CD14-positive monocyte (primary cell): ENCODE measurements at regions of chr17 and their contacts with region 1.

Region 1: GRCh38 chr17:28763804-28764266 is 20.0 kb downstream of the TRAF4 start:
- DNase-seq: peak; percentile 48 to 72 (median 59)
- H3K4me3 ChIP-seq: no peak overlapping the region
- H3K4me3 Mint-ChIP-seq: no peak overlapping the region
- H3K27ac ChIP-seq: no peak overlapping the region
- H3K27ac Mint-ChIP-seq: no peak overlapping the region
- H3K4me1 ChIP-seq: peaks cover 15 to 16% of the 10 kb centered on the region in 2 donors
- H3K4me1 Mint-ChIP-seq: peaks cover 19% of the 10 kb centered on the region
- H3K27me3 ChIP-seq: no peaks in the 10 kb centered on the region
- H3K27me3 Mint-ChIP-seq: peaks cover 0 to 2% (median 0%) of the 10 kb centered on the region in 3 donors
- CTCF ChIP-seq: peak; percentile 93

Region 2: GRCh38 chr17:28839221-28839620 is 75.4 kb after region 1 on chr17:
- intact Hi-C with region 1: loop called in 1 of 2 experiments (anchors 10 kb)
- DNase-seq: no peak
- H3K4me3 ChIP-seq: no peak overlapping the region
- H3K4me3 Mint-ChIP-seq: no peak overlapping the region
- H3K27ac ChIP-seq: no peak overlapping the region
- H3K27ac Mint-ChIP-seq: no peak overlapping the region
- H3K4me1 ChIP-seq: peaks cover 13 to 15% of the 10 kb centered on the region in 2 donors
- H3K4me1 Mint-ChIP-seq: peaks cover 17% of the 10 kb centered on the region
- H3K27me3 ChIP-seq: no peaks in the 10 kb centered on the region
- H3K27me3 Mint-ChIP-seq: no peaks in the 10 kb centered on the region
- CTCF ChIP-seq: no peak

Region 3: DNA sequence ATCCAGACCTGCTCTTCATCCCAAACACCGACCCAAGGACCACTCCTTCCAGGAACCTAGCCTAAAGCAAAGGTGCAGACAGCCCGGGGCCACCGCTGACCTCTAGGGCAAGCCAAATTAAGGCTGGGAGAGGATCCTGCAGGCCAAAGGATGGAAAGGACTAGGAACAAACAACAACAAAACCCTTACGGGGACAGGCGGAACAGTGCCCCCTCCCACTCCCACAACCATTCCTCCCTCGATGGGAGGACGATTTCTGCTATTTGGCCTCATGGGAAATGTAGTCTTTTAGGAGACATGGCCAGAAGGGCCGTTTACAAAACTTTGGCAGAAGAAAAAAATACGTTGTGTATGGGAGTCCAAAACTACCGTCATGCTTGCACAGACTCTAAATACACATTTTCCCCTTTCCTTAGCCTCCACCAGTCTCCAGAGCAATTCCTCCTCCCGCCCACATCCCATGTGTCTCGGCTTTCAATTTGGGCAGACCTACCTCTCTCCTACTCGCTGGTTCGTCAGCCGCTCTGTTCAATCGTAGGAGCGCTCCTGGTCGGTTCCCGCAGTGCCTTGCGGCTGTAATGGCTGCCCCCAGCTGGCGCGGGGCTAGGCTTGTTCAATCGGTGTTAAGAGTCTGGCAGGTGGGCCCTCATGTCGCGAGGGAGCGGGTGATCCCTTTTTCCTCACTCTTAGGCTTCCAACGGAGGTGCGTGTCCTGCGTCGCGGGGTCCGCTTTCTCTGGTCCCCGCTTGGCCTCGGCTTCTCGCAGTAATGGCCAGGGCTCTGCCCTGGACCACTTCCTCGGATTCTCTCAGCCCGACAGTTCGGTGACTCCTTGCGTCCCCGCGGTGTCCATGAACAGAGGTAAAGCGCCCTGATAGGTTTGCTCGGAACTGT is 90.9 kb after region 1 on chr17 and contains the start of gene ERAL1:
- intact Hi-C with region 1: loop called in 1 of 2 experiments (anchors 10 kb)
- DNase-seq: peak; percentile 67 to 76 (median 70)
- H3K4me3 ChIP-seq: peak within 1 kb of the TSS; percentile 74 to 92 (median 88)
- H3K4me3 Mint-ChIP-seq: peak within 1 kb of the TSS; percentile 95 to 98
- H3K27ac ChIP-seq: peak within 1 kb of the TSS; percentile 52 to 86
- H3K27ac Mint-ChIP-seq: peak within 1 kb of the TSS; percentile 83 to 96 (median 90)
- H3K4me1 ChIP-seq: peaks cover 12 to 17% of the 10 kb centered on the region in 2 donors
- H3K4me1 Mint-ChIP-seq: peaks cover 13% of the 10 kb centered on the region
- H3K27me3 ChIP-seq: no peaks in the 10 kb centered on the region
- H3K27me3 Mint-ChIP-seq: peaks cover 0 to 4% (median 1%) of the 10 kb centered on the region in 3 donors
- CTCF ChIP-seq: no peak
- polyA plus RNA-seq, gene ERAL1: 27.7 to 34.5 (median 33.8) TPM

Region 4: DNA sequence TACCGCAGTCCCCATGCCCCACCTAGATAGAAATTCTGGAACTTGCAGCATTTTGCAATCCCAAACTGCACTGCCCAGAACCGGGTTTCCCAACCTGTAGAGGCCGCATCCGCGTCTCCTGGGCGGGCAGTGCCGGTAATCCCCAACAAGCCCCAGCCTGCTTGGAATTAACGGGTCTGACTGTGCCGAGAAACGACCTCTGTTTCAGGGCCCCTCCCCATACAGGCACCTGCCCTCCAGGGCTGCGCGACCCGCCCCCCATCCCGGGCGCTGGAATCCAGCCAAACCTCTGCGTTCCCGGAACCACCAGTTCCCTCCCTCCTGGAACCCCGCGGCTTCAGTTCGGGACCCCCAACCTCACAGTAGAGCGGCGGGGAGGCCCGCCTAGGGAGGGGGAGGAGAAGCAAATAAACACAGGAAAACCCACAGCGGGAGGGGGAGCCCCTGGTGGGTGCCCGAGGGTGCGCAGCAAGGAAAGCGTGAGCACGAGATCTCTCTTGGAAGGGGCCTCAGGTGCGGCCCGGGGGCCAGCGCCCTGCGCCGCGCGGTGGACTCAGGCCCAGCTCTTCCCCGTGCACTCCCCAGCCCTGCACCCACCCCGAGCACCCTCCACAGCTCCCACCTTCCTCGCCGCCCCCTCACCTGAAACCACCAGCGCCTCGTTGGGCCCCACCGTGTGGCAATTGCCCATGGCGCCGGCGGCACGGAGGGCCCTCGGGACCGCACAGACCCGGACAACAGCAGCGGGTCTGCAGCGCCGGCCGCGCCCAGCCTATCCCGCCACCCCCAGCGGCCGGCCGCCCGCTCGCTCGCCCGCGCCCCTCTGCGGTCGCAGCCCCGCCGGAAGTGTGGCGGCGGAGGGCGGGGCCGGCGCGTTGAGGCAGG is 133.3 kb after region 1 on chr17 and contains the start of gene FLOT2:
- intact Hi-C with region 1: no loop called
- DNase-seq: peak; percentile 37 to 92 (median 79)
- H3K4me3 ChIP-seq: peak within 1 kb of the TSS; percentile 79 to 98 (median 86)
- H3K4me3 Mint-ChIP-seq: peak within 1 kb of the TSS; percentile 92 to 93
- H3K27ac ChIP-seq: peak within 1 kb of the TSS; percentile 84 to 90
- H3K27ac Mint-ChIP-seq: peak within 1 kb of the TSS; percentile 85 to 96 (median 93)
- H3K4me1 ChIP-seq: peaks cover 63 to 70% of the 10 kb centered on the region in 2 donors
- H3K4me1 Mint-ChIP-seq: peaks cover 56% of the 10 kb centered on the region
- H3K27me3 ChIP-seq: no peaks in the 10 kb centered on the region
- H3K27me3 Mint-ChIP-seq: peaks cover 0 to 7% (median 1%) of the 10 kb centered on the region in 3 donors
- CTCF ChIP-seq: peak; percentile 60
- polyA plus RNA-seq, gene FLOT2: 138 to 271 (median 244) TPM

Region 5: DNA sequence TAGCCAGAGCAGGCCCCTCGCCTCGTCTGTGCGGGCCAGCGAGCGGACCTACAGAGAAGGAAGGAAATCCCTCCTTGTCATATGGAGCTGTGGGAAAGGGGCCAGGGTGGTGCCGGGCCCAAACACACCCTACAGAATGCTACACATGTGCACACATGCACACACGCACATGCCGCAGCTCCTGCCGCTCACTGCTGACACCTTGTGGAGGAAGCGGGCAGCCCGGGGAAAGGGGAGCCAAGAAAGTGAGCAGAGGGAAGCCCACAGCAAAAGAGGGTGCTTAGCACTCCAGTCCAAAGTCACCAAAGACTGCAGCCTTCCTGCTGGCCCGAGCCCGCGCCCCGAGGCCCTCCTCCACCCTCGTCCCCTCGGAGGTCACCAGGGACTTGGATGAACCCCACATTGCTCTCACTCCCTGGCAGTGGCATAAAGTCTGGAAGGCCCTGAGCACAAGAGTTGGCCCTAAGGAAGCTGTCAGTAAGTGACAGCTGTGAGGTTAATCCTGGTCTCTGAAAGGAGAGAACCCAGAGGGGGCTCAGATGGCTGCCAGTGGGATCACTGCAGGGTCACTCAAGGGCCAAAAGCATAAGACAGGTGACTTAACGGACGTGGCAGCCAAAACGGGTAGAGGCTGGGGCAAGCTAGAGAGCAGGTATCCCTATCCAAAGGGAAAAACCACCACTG is 348.1 kb after region 1 on chr17:
- intact Hi-C with region 1: loop called in 1 of 2 experiments (anchors 10 kb)
- DNase-seq: peak; percentile 34 to 51 (median 48)
- H3K4me3 ChIP-seq: no peak overlapping the region
- H3K4me3 Mint-ChIP-seq: no peak overlapping the region
- H3K27ac ChIP-seq: peak overlapping the region in 1 of 2 donors; percentile 15
- H3K27ac Mint-ChIP-seq: peak overlapping the region in 2 of 7 donors; percentile 26 to 35
- H3K4me1 ChIP-seq: peaks cover 19 to 41% of the 10 kb centered on the region in 2 donors
- H3K4me1 Mint-ChIP-seq: peaks cover 33% of the 10 kb centered on the region
- H3K27me3 ChIP-seq: no peaks in the 10 kb centered on the region
- H3K27me3 Mint-ChIP-seq: no peaks in the 10 kb centered on the region
- CTCF ChIP-seq: peak; percentile 79